ENCODE measurements at regions of chr7 and their contacts with region 1.

Region 1: DNA sequence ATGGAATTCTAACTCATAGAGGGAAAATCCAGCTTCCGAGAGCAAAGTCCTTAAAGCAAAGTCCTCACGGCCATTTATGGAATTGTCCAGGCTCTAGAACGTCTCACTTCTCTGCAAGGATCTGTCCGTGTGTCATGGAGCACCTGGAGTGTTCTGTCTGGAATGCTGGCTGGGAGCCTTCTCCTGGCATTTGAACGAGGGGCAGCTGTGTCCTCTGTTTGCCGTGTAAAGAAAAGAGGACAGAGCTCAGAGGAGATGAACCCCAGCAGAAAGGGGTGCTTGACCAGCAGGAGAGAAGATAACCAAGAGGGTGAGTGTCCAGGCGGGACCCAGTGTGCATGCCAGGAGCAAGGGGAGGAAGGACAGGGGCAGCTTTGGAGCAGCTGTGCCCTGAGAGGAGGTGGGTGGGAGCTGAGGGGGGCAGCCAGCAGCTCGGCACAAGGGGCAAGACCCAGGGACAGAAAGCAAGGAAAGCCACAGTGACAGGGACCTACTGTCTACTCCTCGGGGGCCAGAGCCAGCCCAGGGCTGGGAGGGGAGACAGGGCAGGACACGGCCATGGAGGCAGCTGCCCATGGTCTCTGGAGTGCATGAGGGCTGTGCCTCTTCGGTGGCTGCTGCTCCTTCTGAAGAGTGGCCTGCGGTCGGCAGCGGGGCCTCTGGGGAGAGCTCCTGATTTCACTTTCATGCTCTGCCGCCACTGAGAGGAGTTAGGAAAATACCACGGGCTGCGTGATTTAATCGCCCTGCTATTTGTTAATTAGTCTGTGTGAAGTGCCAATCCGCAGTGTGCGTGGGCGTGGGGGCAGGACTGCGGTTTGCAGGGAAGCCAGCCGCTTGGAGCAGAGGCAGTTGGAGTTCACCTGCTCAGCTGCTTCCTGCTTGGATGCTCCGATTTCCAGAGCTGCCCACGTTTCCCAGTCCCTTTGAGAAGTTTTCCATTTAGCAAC is 149.3 kb upstream of the SHH start:
- DNase-seq: peak; percentile 58
- ATAC-seq: peak; percentile 40
- H3K4me3 ChIP-seq: peak overlapping the region; percentile 26; the same call in 1 of the 2 replicates
- H3K27ac ChIP-seq: peak overlapping the region; percentile 93
- H3K4me1 ChIP-seq: peaks cover 43% of the 10 kb centered on the region
- H3K27me3 ChIP-seq: no peaks in the 10 kb centered on the region
- CTCF ChIP-seq: no peak

Region 2: DNA sequence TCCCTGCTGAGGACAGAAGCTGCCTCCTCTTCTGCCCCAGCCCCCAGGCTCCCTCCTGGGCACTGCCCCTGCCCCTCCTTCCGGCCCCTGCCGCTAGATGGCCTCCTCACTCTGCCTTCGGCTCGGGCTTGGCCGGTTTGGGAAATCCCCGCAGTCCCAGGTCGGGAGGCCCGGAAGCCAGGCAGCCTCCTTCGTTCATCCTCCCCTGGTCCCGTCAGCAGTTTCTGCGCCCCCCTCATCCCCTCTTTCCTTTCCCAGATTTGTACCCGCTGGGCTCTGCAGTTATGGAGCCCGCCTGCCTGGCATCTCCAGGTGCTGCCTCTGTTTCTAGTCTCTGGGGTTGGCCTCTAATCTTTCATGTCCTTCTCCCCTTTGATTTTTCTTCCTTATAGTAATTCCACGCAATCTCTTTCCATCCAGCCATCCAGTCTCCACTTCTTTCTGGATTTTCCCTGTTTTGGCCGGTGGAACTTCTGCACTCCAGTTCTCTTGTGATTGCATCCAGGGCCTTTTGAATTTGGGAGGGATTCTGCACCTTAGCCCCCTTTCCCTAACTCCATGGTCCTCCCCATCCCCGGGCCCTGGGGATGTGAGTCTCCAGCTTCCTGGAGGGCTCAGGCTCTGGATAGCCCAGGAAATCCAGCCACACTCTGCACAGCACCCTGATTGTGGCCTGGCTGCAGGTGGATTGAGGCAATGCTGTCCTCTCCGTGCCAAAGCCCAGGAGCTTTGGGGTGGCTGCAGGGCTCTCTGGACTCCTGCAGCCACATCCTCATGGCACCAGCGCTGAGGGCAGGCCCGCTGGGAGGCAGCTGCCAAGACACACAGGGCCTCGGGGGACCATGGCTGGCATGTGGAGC is 146.0 kb before region 1 on chr7:
- CTCF ChIA-PET with region 1: interaction called, 4 read pairs
- POLR2A ChIA-PET with region 1: no interaction called
- intact Hi-C with region 1: loop called (anchors 5 kb)
- DNase-seq: peak; percentile 76
- ATAC-seq: peak; percentile 73
- H3K4me3 ChIP-seq: no peak overlapping the region
- H3K27ac ChIP-seq: no peak overlapping the region
- H3K4me1 ChIP-seq: peaks cover 21% of the 10 kb centered on the region
- H3K27me3 ChIP-seq: peaks cover 28% of the 10 kb centered on the region
- CTCF ChIP-seq: peak; percentile 74

Region 3: DNA sequence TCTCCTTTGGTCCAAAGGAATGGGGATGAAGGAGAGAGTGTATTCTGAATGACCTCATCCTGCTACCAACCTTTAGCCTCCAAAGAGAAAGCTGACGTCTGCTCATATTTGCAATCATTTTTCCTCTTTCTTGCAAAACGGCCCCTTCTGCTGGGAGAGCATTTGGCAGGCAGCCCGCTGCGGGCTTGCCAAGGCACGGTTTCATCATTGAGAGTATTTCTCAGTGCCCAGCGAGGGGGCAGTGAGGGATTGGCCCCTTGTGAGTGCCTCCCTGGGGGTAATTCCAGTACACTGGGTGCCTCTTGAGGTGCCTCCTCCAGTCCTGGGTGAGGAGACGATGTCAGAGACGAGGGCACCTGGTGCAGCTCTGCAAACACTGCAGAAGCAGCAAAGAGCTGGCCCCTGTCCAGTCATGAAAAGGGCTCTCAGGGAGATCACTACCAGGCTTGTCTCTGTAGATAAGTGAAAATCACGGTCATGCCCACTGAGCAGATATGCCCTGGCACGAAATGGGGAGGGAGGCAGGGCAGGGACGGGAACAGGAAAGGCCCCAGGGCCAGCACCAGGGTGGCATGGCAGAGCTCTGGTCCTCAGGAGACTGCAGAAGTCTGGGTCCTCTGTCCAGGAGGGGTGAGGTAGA is 100.6 kb before region 1 on chr7:
- CTCF ChIA-PET with region 1: interaction called, 3 read pairs
- POLR2A ChIA-PET with region 1: no interaction called
- intact Hi-C with region 1: loop called (anchors 1 kb)
- DNase-seq: peak; percentile 90
- ATAC-seq: peak; percentile 29
- H3K4me3 ChIP-seq: peak overlapping the region; percentile 44
- H3K27ac ChIP-seq: peak overlapping the region; percentile 66
- H3K4me1 ChIP-seq: peaks cover 42% of the 10 kb centered on the region
- H3K27me3 ChIP-seq: no peaks in the 10 kb centered on the region
- CTCF ChIP-seq: no peak

Region 4: DNA sequence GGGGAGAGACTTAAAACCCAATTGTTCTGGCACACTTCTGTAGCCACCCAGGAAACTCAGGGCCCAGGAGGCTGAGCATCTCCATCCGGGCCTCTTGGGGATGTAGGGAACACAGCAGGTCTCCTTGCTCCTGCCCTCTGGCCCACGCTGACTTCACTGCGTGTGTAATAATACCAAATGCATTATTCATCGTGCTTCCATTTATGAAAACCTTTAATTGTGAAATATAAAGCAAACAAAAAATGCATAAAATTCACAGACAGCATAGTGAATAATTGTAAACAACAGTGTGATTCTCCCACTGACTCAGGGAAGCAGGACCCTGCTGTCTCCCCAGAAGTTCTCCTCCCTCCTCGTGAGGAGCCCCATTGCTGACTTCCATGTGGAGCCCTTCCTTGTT is 78.9 kb before region 1 on chr7:
- CTCF ChIA-PET with region 1: no interaction called
- POLR2A ChIA-PET with region 1: interaction called, 6 read pairs
- intact Hi-C with region 1: loop called (anchors 5 kb)
- DNase-seq: peak; percentile 83
- ATAC-seq: peak; percentile 70
- H3K4me3 ChIP-seq: no peak overlapping the region
- H3K27ac ChIP-seq: peak overlapping the region; percentile 79
- H3K4me1 ChIP-seq: peaks cover 38% of the 10 kb centered on the region
- H3K27me3 ChIP-seq: no peaks in the 10 kb centered on the region
- CTCF ChIP-seq: no peak

Region 5: GRCh38 chr7:155918714-155919399 is 42.7 kb before region 1 on chr7:
- CTCF ChIA-PET with region 1: interaction called, 3 read pairs
- POLR2A ChIA-PET with region 1: no interaction called
- intact Hi-C with region 1: loop called (anchors 2 kb)
- DNase-seq: peak; percentile 94
- ATAC-seq: peak; percentile 76
- H3K4me3 ChIP-seq: peak overlapping the region; percentile 7; the same call in 1 of the 2 replicates
- H3K27ac ChIP-seq: peak overlapping the region; percentile 76
- H3K4me1 ChIP-seq: peaks cover 54% of the 10 kb centered on the region
- H3K27me3 ChIP-seq: no peaks in the 10 kb centered on the region
- CTCF ChIP-seq: no peak

Region 6: GRCh38 chr7:156006024-156006423 is 44.5 kb after region 1 on chr7:
- CTCF ChIA-PET with region 1: no interaction called
- POLR2A ChIA-PET with region 1: no interaction called
- intact Hi-C with region 1: loop called (anchors 2 kb)
- DNase-seq: peak; percentile 30
- ATAC-seq: peak; percentile 85
- H3K4me3 ChIP-seq: no peak overlapping the region
- H3K27ac ChIP-seq: no peak overlapping the region
- H3K4me1 ChIP-seq: no peaks in the 10 kb centered on the region; the same call in 1 of the 2 replicates
- H3K27me3 ChIP-seq: no peaks in the 10 kb centered on the region
- CTCF ChIP-seq: no peak

Region 7: GRCh38 chr7:156473476-156474240 is 512.1 kb after region 1 on chr7:
- CTCF ChIA-PET with region 1: no interaction called
- POLR2A ChIA-PET with region 1: no interaction called
- intact Hi-C with region 1: loop called (anchors 10 kb)
- DNase-seq: peak; percentile 52
- ATAC-seq: peak; percentile 65
- H3K4me3 ChIP-seq: no peak overlapping the region
- H3K27ac ChIP-seq: no peak overlapping the region
- H3K4me1 ChIP-seq: peaks cover 12% of the 10 kb centered on the region
- H3K27me3 ChIP-seq: no peaks in the 10 kb centered on the region
- CTCF ChIP-seq: peak; percentile 88